Heart left ventricle (tissue), 16 donors: ENCODE measurements at regions of chr12 and their contacts with region 1.

Region 1: GRCh38 chr12:76666290-76666835 is 97.6 kb upstream of the ZDHHC17 start:
- DNase-seq: no peak
- ATAC-seq: no peak
- H3K4me3 ChIP-seq: no peak overlapping the region
- H3K27ac ChIP-seq: peak overlapping the region in 6 of 12 donors; percentile 2 to 61 (median 34)
- H3K4me1 ChIP-seq: peaks cover 0 to 13% (median 0%) of the 10 kb centered on the region in 12 donors
- H3K27me3 ChIP-seq: no peaks in the 10 kb centered on the region
- CTCF ChIP-seq: no peak
- POLR2A ChIP-seq: no peak

Region 2: GRCh38 chr12:76636121-76636692 is 30.2 kb before region 1 on chr12:
- intact Hi-C with region 1: loop called in 1 of 10 experiments (anchors 5 kb)
- DNase-seq: no peak
- ATAC-seq: no peak
- H3K4me3 ChIP-seq: no peak overlapping the region
- H3K27ac ChIP-seq: no peak overlapping the region
- H3K4me1 ChIP-seq: peaks cover 0 to 15% (median 0%) of the 10 kb centered on the region in 12 donors
- H3K27me3 ChIP-seq: no peaks in the 10 kb centered on the region
- CTCF ChIP-seq: no peak
- POLR2A ChIP-seq: no peak